Ascending aorta (tissue), 2 donors: ENCODE measurements at regions of chr4 and their contacts with region 1.

Region 1: GRCh38 chr4:8607603-8608481 is 15.3 kb downstream of the CPZ start:
- DNase-seq: no peak
- H3K4me3 ChIP-seq: no peak overlapping the region
- H3K27ac ChIP-seq: no peak overlapping the region
- H3K4me1 ChIP-seq: no peaks in the 10 kb centered on the region
- H3K27me3 ChIP-seq: no peaks in the 10 kb centered on the region
- CTCF ChIP-seq: peak; percentile 50 to 92 (median 88)

Region 2: GRCh38 chr4:8917868-8918783 is 310.3 kb after region 1 on chr4:
- intact Hi-C with region 1: loop called (anchors 10 kb)
- DNase-seq: peak in 1 of 2 donors; percentile 63
- H3K4me3 ChIP-seq: no peak overlapping the region
- H3K27ac ChIP-seq: no peak overlapping the region
- H3K4me1 ChIP-seq: no peaks in the 10 kb centered on the region
- H3K27me3 ChIP-seq: no peaks in the 10 kb centered on the region
- CTCF ChIP-seq: peak; percentile 36 to 73 (median 56)